Activated T-helper 1 cell treated with anti-CD3 and anti-CD28 coated beads, Interleukin-12 subunit alpha, Interleukin-12 subunit beta, Interleukin-2, Interleukin-4 antibody, amounts not matched to agents 30 ng/mL and 10 ng/mL and 1 ng/mL, durations not matched to agents 14 hours and 24 hours and 36 hours (primary cell): ENCODE measurements at regions of chr1 and their contacts with region 1.

Region 1: DNA sequence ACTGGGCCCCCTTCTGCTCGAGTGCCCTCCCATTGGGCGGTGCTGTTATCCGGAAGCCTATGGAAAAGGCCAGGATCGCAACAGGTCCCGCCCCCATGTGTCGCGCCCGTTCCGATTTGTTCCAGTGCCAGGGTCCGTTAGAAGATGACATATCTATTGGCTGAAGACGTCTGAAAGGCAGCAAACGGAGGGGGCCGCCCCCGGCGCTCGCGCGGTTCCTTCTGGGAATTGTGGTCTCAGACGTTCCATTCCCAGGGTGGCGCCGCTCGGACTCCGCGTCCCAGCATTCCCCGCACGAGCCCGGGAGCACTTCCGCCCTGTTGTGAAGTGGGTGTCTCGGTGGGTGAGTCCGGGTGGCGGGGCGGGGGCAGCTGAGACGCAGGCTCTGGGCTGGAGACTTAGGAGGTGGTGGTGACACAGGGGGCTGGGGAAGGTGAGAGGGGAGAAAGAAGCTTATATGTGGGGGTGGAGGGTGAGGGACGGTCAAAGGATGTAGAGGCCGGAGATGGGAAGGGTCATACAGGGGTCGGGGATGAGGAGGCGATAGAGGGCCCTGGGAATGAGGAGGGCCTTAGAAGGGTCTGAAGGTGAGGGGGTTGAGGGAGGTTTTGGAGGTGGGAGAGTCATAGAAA is at the start of gene ZSCAN20:
- DNase-seq: peak; percentile 81
- H3K4me3 Mint-ChIP-seq: peak within 1 kb of the TSS; percentile 88
- H3K27ac Mint-ChIP-seq: peak within 1 kb of the TSS; percentile 68
- H3K4me1 Mint-ChIP-seq: peaks cover 24% of the 10 kb centered on the region
- H3K27me3 Mint-ChIP-seq: no peaks in the 10 kb centered on the region
- total RNA-seq, gene ZSCAN20: 2.5 and 2.8 TPM in 2 replicates

Region 2: GRCh38 chr1:33111970-33112369 is 360.5 kb before region 1 on chr1:
- intact Hi-C with region 1: loop called (anchors 1 kb)
- DNase-seq: no peak
- H3K4me3 Mint-ChIP-seq: no peak overlapping the region
- H3K27ac Mint-ChIP-seq: no peak overlapping the region
- H3K4me1 Mint-ChIP-seq: peaks cover 10% of the 10 kb centered on the region
- H3K27me3 Mint-ChIP-seq: peaks cover 3% of the 10 kb centered on the region

Region 3: DNA sequence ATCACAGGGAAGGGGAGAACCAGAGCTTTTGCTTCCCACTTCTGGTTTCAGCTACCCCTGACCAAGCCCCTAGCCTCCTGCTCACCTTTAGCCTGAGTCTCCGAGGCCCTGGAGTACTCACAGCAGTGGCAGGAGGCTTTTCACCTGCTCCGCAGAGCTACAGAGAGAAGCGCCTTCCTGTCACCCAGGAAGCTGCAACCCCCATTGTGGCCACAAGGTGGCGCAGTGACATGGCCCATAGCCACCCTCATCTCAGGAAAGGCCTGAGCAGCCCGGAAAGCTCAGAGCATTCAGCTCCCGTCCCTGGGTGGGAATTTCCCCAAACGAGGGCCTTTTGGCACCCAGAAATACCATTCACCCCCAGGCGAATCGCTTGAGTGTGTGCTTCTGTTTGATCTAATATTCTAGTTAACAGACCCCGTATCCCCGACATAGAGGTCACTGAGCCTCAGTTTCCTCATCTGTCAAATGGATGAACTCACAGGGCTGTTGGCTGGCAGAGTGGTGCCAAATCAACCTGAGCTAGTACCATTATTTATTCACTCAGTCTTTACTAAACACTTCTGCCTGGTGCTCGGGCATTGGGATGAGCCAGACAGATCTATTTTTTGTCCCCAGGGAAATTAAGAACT is 176.9 kb before region 1 on chr1:
- intact Hi-C with region 1: loop called (anchors 1 kb)
- DNase-seq: peak; percentile 79
- H3K4me3 Mint-ChIP-seq: no peak overlapping the region
- H3K27ac Mint-ChIP-seq: no peak overlapping the region
- H3K4me1 Mint-ChIP-seq: peaks cover 8% of the 10 kb centered on the region
- H3K27me3 Mint-ChIP-seq: no peaks in the 10 kb centered on the region

Region 4: GRCh38 chr1:33367485-33368405 is 104.7 kb before region 1 on chr1:
- intact Hi-C with region 1: loop called (anchors 1 kb)
- DNase-seq: peak; percentile 73
- H3K4me3 Mint-ChIP-seq: no peak overlapping the region
- H3K27ac Mint-ChIP-seq: no peak overlapping the region
- H3K4me1 Mint-ChIP-seq: no peaks in the 10 kb centered on the region
- H3K27me3 Mint-ChIP-seq: peaks cover 2% of the 10 kb centered on the region

Region 5: GRCh38 chr1:33494929-33495328 is 22.5 kb after region 1 on chr1:
- intact Hi-C with region 1: no loop called
- DNase-seq: no peak
- H3K4me3 Mint-ChIP-seq: no peak overlapping the region
- H3K27ac Mint-ChIP-seq: no peak overlapping the region
- H3K4me1 Mint-ChIP-seq: no peaks in the 10 kb centered on the region
- H3K27me3 Mint-ChIP-seq: no peaks in the 10 kb centered on the region

Region 6: GRCh38 chr1:34852677-34853217 is 1380.3 kb after region 1 on chr1:
- intact Hi-C with region 1: loop called (anchors 10 kb)
- DNase-seq: peak; percentile 87
- H3K4me3 Mint-ChIP-seq: no peak overlapping the region
- H3K27ac Mint-ChIP-seq: no peak overlapping the region
- H3K4me1 Mint-ChIP-seq: peaks cover 18% of the 10 kb centered on the region
- H3K27me3 Mint-ChIP-seq: no peaks in the 10 kb centered on the region